ENCODE measurements at regions of chr6 and their contacts with region 1.

Region 1: GRCh38 chr6:42505377-42505702 is 53.6 kb upstream of the TRERF1 start:
- DNase-seq: peak; percentile 37
- H3K4me3 ChIP-seq: no peak overlapping the region
- CTCF ChIP-seq: no peak

Region 2: DNA sequence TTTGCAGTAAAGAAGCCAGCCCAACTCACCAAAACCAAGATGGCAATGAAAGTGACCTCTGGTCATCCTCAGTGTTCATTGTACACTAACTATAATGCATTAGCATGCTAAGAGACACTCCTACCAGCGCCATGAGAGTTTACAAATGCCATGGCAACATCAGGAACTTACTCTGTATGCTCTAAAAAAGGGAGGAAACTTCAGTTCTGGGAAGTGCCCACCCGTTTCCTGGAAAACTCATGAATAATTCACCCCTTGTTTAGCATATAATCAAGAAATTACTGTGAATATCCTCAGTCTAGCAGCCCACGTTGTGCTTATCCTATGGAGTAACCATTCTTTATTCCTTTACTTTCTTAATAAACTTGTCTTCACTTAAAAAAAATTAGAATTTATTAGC is 34.2 kb before region 1 on chr6:
- CTCF ChIA-PET with region 1: no interaction called
- POLR2A ChIA-PET with region 1: no interaction called
- DNase-seq: no peak
- H3K4me3 ChIP-seq: no peak overlapping the region
- CTCF ChIP-seq: no peak

Region 3: DNA sequence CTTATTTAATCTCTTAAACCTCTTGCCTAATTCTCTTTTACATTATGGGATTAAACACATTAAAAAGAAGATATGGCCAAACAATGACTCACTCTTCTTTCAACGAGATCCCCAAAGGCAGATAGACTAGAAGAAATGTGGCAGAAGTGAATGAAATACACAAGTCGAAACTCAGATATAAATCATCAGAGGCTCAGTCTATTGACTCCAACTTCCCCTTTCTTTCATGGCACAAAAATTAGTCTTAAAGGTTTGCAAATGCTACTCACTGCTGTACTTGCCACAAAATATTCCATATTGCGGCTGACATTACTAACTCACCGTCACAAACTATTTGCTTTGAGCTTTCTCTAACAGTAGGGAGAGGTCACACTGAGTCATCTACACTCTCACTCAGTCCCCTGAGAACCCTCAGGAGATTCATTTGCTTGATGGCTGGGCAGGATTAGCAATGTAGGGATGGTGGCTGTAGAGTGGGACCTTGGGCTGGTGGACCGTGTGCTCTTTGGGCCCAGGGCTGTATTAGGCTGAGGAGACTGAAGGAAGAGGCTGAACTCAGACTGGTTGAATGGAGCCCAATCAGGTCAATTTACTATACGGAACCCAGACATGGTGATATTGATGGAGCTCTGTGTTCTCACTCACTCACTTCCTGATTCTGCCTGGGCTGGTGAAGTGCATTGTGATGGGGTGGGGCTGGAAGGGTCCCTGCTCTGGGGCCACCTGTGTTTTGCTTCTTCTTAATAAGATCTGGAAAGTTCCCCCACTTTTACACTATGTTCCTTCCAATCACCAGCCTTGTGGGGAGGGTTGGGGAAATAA is 15.7 kb after region 1 on chr6:
- CTCF ChIA-PET with region 1: interaction called, 19 read pairs
- POLR2A ChIA-PET with region 1: interaction called, 4 read pairs
- DNase-seq: peak; percentile 34
- H3K4me3 ChIP-seq: no peak overlapping the region
- CTCF ChIP-seq: no peak

Region 4: GRCh38 chr6:42563697-42564505 is 58.6 kb after region 1 on chr6 and contains the start of gene UBR2:
- CTCF ChIA-PET with region 1: no interaction called
- POLR2A ChIA-PET with region 1: no interaction called
- DNase-seq: peak; percentile 88
- H3K4me3 ChIP-seq: peak within 1 kb of the TSS; percentile 97
- CTCF ChIP-seq: peak; percentile 11